T-cell (primary cell): ENCODE measurements at regions of chr16 and their contacts with region 1.

Region 1: GRCh38 chr16:85420501-85421337 is 192.4 kb upstream of the GSE1 start:
- DNase-seq: peak; percentile 29 to 88 (median 68)
- ATAC-seq: peak; percentile 72 to 86 (median 75)
- H3K4me3 ChIP-seq: no peak overlapping the region
- H3K4me3 Mint-ChIP-seq: no peak overlapping the region
- H3K27ac ChIP-seq: no peak overlapping the region
- H3K27ac Mint-ChIP-seq: no peak overlapping the region
- H3K4me1 ChIP-seq: peaks cover 0 to 14% of the 10 kb centered on the region in 2 experiments
- H3K4me1 Mint-ChIP-seq: peaks cover 0 to 2% (median 2%) of the 10 kb centered on the region in 3 donors
- H3K27me3 ChIP-seq: peaks cover 0 to 35% of the 10 kb centered on the region in 2 experiments
- H3K27me3 Mint-ChIP-seq: peaks cover 1 to 3% of the 10 kb centered on the region in 2 donors

Region 2: DNA sequence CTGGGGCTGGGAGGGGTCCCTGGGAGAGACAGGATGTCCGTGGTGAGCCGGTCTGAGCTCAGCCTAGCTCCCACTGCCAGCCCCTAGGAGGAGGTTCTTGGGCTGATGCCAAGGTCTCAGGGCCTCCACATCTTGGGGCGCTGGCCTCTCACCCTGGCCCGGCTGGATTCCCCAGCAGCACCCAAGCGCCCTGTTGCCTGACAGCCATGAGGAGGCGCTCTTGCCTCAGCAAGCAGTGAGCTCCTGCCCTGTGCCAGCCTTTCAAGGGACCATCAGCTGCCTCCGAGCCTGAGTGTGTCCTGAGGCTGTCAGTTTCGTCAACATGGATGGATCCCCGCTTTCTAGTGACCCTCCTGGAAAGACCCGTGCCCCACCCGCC is 73.5 kb before region 1 on chr16:
- CTCF ChIA-PET with region 1: no interaction called
- POLR2A ChIA-PET with region 1: no interaction called
- DNase-seq: no peak
- ATAC-seq: no peak
- H3K4me3 ChIP-seq: no peak overlapping the region
- H3K4me3 Mint-ChIP-seq: no peak overlapping the region
- H3K27ac ChIP-seq: no peak overlapping the region
- H3K27ac Mint-ChIP-seq: no peak overlapping the region
- H3K4me1 ChIP-seq: no peaks in the 10 kb centered on the region
- H3K4me1 Mint-ChIP-seq: no peaks in the 10 kb centered on the region
- H3K27me3 ChIP-seq: peaks cover 0 to 12% of the 10 kb centered on the region in 2 experiments
- H3K27me3 Mint-ChIP-seq: peaks cover 0 to 9% of the 10 kb centered on the region in 2 donors

Region 3: DNA sequence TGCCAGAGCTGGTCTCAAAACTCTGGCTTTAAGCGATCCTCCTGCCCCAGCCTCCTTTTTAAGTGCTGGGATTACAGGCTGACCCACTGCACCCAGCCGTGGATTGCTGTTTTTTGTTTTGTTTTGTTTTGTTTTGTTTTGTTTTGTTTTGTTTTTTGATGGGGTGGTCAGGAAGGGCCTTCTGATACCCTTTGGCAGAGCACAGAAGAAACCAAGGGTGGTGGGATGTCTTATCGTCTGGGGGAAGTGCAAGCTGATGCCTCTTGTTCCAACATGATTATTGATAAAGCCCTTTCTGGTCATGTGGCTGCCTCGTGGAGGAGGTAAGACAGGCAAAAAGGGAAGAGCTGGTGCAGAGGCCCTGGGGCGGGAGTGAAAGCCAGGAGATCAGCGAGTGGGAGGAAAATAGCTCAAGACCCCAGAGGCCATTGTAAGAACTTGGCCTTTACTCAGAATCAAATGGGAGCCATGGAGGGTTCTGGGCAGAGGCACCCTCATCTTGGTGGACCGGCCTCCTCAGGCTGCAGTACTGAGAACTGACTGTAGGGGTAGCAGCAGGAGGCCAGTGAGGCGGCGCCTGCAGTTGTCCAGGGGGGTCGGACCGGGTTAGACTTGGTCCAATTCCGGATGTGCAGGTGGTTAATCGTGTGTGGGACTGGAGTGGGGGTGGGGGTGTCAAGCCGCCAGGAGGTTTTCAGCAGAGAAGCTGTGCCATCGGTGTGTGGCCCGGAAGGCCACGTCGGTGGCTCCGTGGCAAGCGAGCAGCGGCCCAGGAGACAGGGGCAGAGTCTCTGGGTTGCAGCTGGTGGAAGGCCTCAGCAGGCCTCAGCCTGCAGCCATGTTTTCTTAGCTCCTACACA is 108.0 kb after region 1 on chr16:
- CTCF ChIA-PET with region 1: no interaction called
- POLR2A ChIA-PET with region 1: no interaction called
- DNase-seq: peak in 14 of 35 experiments; percentile 6 to 51 (median 15)
- ATAC-seq: no peak
- H3K4me3 ChIP-seq: no peak overlapping the region
- H3K4me3 Mint-ChIP-seq: no peak overlapping the region
- H3K27ac ChIP-seq: no peak overlapping the region
- H3K27ac Mint-ChIP-seq: no peak overlapping the region
- H3K4me1 ChIP-seq: no peaks in the 10 kb centered on the region
- H3K4me1 Mint-ChIP-seq: no peaks in the 10 kb centered on the region
- H3K27me3 ChIP-seq: peaks cover 0 to 34% of the 10 kb centered on the region in 2 experiments
- H3K27me3 Mint-ChIP-seq: peaks cover 0 to 2% of the 10 kb centered on the region in 2 donors

Region 4: GRCh38 chr16:85610508-85611332 is 190.0 kb after region 1 on chr16:
- CTCF ChIA-PET with region 1: interaction called, 12 to 14 read pairs
- POLR2A ChIA-PET with region 1: no interaction called
- DNase-seq: peak; percentile 73 to 89 (median 82)
- ATAC-seq: peak; percentile 69 to 74 (median 70)
- H3K4me3 ChIP-seq: peak overlapping the region; percentile 4 to 64
- H3K4me3 Mint-ChIP-seq: peak overlapping the region; percentile 75 to 83 (median 76)
- H3K27ac ChIP-seq: no peak overlapping the region
- H3K27ac Mint-ChIP-seq: peak overlapping the region; percentile 6 to 71
- H3K4me1 ChIP-seq: peaks cover 17 to 78% of the 10 kb centered on the region in 2 experiments
- H3K4me1 Mint-ChIP-seq: peaks cover 26 to 51% (median 33%) of the 10 kb centered on the region in 3 donors
- H3K27me3 ChIP-seq: peaks cover 0 to 24% of the 10 kb centered on the region in 2 experiments
- H3K27me3 Mint-ChIP-seq: peaks cover 0 to 3% of the 10 kb centered on the region in 2 donors

Region 5: DNA sequence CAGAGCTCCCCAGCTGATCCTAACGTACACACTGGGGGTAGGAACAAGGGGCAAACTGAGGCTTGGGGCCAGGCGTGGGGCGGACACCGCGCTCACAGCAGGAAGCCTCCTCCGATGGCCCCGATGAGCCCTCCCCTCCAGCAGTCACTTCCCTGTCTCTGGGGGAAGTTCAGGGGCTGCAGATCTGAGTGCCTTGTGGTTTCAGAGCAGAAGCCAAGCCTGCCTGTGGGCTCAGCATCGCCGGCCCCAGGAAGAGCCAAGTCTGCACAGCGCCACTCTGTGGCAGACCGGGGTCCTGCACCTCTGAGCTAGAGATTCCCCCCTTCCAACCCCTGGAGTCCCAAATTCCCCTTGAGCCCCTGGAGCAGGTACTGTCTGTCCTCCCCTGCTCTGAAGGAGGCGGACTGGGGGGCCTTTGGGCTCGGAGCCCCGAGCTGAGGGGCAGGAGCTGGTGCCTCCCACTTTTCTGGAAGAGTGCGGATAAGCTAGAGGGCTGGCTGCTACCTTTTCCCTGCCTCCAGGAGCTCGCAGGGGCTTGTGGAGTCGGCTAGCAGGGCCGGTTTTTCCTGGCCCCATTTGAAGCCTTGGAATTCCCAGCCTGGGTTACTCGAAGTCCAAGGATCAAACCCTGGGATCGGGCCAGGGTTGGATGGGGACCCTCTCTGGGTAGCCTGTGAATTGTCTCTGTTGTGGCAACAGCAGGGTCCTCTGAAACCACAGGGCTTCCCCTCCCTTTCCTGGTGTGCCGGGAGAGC is 195.3 kb after region 1 on chr16:
- CTCF ChIA-PET with region 1: interaction called, 12 to 14 read pairs
- POLR2A ChIA-PET with region 1: no interaction called
- DNase-seq: peak; percentile 61 to 89 (median 78)
- ATAC-seq: peak; percentile 54 to 67 (median 58)
- H3K4me3 ChIP-seq: peak overlapping the region; percentile 12 to 58
- H3K4me3 Mint-ChIP-seq: peak overlapping the region; percentile 66 to 78 (median 71)
- H3K27ac ChIP-seq: peak overlapping the region; percentile 25
- H3K27ac Mint-ChIP-seq: peak overlapping the region; percentile 66 to 74
- H3K4me1 ChIP-seq: peaks cover 21 to 78% of the 10 kb centered on the region in 2 experiments
- H3K4me1 Mint-ChIP-seq: peaks cover 32 to 54% (median 39%) of the 10 kb centered on the region in 3 donors
- H3K27me3 ChIP-seq: peaks cover 0 to 34% of the 10 kb centered on the region in 2 experiments
- H3K27me3 Mint-ChIP-seq: peaks cover 0 to 3% of the 10 kb centered on the region in 2 donors